ENCODE measurements at regions of chr9 and their contacts with region 1.

Region 1: DNA sequence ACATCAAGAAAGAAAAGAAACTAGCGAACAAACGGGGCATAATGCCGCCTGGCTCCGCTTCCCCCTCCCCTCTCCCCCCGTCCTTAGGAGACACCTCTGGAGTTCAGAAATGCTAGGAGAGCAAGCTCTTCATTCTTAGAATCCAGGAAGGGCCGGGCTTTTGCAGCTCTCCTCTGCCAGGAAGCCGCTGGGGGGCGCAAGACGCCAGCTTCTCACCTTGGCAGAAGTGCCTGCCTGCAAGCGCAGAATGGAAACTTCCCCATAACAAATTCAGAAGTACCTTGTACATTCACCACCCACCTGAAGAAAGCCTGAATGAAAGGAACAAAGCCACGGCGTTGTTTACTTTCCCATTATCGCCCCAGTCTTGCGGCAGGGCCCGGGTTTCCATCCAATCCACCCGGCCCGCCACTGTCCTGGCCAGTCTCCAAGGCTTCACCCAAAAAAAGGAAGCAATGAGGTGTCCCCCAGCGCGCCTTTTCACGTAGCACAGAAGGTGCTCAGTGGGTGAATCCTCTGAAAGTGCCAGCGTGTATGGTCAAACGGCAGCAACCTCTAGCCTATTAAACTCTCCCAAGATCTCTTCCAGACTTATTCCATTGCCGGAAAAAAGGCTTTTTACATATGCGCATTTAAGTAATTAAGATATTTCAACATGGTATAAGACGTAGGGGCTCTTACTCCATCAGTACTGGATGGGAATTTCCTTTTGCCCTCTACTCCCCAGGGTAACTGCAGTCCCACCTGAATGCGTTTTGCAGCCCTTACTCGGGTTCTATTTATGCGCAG is 1.6 kb upstream of the GADD45G start:
- DNase-seq: peak; percentile 94
- ATAC-seq: peak; percentile 35
- H3K4me3 Mint-ChIP-seq: peak overlapping the region; percentile 73
- H3K27ac Mint-ChIP-seq: peak overlapping the region; percentile 53
- H3K4me1 Mint-ChIP-seq: peaks cover 23% of the 10 kb centered on the region
- H3K27me3 Mint-ChIP-seq: peaks cover 2% of the 10 kb centered on the region
- CTCF ChIP-seq: peak; percentile 78

Region 2: DNA sequence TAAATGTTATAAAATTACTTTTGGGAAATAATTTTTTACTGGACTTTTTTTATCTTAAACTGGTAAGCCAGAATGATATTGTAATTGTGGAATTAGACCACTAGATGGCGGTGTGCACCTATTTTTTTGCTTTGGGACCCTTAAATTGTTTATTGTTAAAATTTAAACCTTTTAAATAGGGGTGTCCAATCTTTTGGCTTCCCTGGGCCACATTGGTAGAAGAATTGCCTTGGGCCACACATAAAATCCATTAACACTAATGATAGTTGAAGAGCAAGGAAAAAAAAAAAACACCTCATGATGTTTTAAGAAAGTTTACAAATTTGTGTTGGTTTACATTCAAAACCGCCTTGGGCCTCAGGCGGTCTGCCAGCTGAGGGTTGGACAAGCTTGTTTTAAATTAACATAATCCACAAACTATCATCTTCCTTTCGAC is 26.8 kb before region 1 on chr9:
- CTCF ChIA-PET with region 1: interaction called, 19 read pairs
- POLR2A ChIA-PET with region 1: no interaction called
- intact Hi-C with region 1: no loop called
- DNase-seq: no peak
- ATAC-seq: no peak
- H3K4me3 Mint-ChIP-seq: no peak overlapping the region
- H3K27ac Mint-ChIP-seq: no peak overlapping the region
- H3K4me1 Mint-ChIP-seq: peaks cover 21% of the 10 kb centered on the region
- H3K27me3 Mint-ChIP-seq: peaks cover 17% of the 10 kb centered on the region
- CTCF ChIP-seq: peak; percentile 91

Region 3: DNA sequence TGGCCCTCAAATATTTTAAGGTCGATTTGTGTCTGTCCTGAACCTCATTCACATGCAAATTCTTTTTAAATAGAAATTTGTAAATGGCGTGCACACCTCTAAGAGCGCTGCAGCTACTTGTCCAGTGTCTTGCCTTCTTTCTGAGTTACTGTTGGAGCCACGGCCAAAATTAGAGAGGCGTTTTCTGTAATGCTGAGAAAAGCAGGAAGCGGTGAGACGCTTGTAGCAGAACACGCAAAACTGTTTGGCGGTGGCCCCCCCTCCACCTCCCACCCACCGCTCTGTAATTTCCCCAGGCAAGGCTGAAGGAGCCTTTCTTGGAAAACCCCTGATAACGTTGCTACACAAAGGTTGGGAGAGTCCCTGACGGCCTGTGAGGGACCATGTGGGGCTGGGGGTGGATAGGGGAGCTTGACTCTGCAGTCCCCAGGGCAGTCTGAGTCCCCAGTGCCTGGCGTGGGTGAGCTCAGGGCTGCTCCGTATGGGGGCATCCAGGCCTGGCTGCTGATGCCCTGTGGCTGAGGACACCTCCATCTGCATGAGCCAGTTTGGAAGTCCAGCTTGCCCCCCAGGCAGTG is 98.1 kb after region 1 on chr9:
- CTCF ChIA-PET with region 1: interaction called, 12 read pairs
- POLR2A ChIA-PET with region 1: interaction called, 4 read pairs
- intact Hi-C with region 1: loop called (anchors 10 kb)
- DNase-seq: peak; percentile 94
- ATAC-seq: peak; percentile 96
- H3K4me3 Mint-ChIP-seq: peak overlapping the region; percentile 82
- H3K27ac Mint-ChIP-seq: peak overlapping the region; percentile 93
- H3K4me1 Mint-ChIP-seq: peaks cover 47% of the 10 kb centered on the region
- H3K27me3 Mint-ChIP-seq: no peaks in the 10 kb centered on the region
- CTCF ChIP-seq: no peak

Region 4: GRCh38 chr9:89919169-89919681 is 316.1 kb after region 1 on chr9:
- CTCF ChIA-PET with region 1: interaction called, 28 read pairs
- POLR2A ChIA-PET with region 1: no interaction called
- intact Hi-C with region 1: loop called (anchors 2 kb)
- DNase-seq: peak; percentile 68
- ATAC-seq: peak; percentile 76
- H3K4me3 Mint-ChIP-seq: no peak overlapping the region
- H3K27ac Mint-ChIP-seq: no peak overlapping the region
- H3K4me1 Mint-ChIP-seq: peaks cover 23% of the 10 kb centered on the region
- H3K27me3 Mint-ChIP-seq: peaks cover 10% of the 10 kb centered on the region
- CTCF ChIP-seq: peak; percentile 35

Region 5: GRCh38 chr9:90095682-90096081 is 492.5 kb after region 1 on chr9:
- CTCF ChIA-PET with region 1: interaction called, 355 read pairs
- POLR2A ChIA-PET with region 1: interaction called, 4 read pairs
- intact Hi-C with region 1: no loop called
- DNase-seq: peak; percentile 37
- ATAC-seq: peak; percentile 34
- H3K4me3 Mint-ChIP-seq: no peak overlapping the region
- H3K27ac Mint-ChIP-seq: no peak overlapping the region
- H3K4me1 Mint-ChIP-seq: peaks cover 20% of the 10 kb centered on the region
- H3K27me3 Mint-ChIP-seq: peaks cover 21% of the 10 kb centered on the region
- CTCF ChIP-seq: no peak

Region 6: DNA sequence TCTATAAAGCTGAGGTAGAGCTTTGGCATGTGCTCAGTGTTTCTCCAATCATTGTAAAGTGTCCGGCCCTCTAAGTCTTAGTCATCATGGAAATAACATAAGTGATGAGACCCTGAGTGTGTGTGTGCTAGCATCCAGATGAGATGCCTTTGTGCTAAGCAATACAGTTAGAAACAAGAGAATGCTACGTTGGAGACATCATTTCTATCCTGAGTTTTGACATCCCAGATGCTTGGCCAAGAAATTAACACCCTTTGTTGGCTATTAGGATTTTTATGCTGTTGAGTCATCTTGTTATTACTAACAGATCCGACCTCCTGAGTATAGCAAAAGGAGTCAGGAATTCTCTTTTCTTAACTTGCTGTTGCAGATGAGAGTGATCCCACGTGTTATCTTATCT is 509.6 kb after region 1 on chr9:
- CTCF ChIA-PET with region 1: interaction called, 355 read pairs
- POLR2A ChIA-PET with region 1: no interaction called
- intact Hi-C with region 1: no loop called
- DNase-seq: no peak
- ATAC-seq: no peak
- H3K4me3 Mint-ChIP-seq: no peak overlapping the region
- H3K27ac Mint-ChIP-seq: no peak overlapping the region
- H3K4me1 Mint-ChIP-seq: no peaks in the 10 kb centered on the region
- H3K27me3 Mint-ChIP-seq: peaks cover 3% of the 10 kb centered on the region
- CTCF ChIP-seq: no peak

Measured in activated CD8-positive, alpha-beta T cell treated with anti-CD3 and anti-CD28 coated beads for 36 hours (primary cell).